GM13977 (cell line): ENCODE measurements at regions of chr17 and their contacts with region 1.

Region 1: GRCh38 chr17:61837175-61838051 is 25.9 kb downstream of the BRIP1 start:
- DNase-seq: peak; percentile 33
- CTCF ChIP-seq: peak; percentile 74

Region 2: DNA sequence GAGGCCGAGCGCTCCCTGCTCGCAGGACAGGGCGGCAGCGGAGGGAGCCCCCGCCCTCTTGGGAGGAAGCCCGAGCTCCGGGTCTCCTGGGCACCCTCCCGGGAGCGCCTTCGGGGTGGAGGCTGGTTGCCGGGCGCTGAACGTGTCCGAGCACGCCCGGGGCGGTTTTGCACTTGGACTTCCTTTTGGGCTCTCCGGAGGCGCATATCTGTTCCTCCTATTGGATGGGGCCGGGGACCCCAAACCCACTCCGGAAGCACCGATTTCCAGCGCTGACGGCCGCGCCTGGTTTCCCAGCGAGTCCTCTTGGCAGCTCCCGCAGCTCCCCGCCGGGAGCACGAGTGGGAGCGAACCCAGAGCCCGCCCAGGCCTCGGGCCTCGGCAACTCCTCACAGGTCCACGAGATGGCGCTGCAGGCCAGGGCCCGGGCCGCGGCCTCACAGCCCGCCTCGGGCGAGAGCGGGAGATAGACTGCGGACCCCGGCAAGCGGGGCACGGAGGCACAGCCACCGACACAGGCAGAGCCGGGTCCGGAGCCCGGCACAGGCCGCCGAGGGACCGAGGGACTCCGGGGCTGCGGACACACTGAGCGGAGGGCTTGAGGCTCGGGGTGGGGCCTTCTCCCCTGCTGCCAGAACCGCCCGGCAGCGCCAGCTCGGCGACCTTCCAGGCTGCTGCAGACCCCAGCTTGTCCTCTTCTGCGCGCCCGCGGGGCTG is 425.1 kb before region 1 on chr17:
- in situ Hi-C with region 1: loop called (anchors 25 kb)
- DNase-seq: peak; percentile 96
- CTCF ChIP-seq: peak; percentile 98

Region 3: GRCh38 chr17:61611673-61612022 is 225.8 kb before region 1 on chr17:
- in situ Hi-C with region 1: no loop called
- DNase-seq: no peak
- CTCF ChIP-seq: no peak

Region 4: DNA sequence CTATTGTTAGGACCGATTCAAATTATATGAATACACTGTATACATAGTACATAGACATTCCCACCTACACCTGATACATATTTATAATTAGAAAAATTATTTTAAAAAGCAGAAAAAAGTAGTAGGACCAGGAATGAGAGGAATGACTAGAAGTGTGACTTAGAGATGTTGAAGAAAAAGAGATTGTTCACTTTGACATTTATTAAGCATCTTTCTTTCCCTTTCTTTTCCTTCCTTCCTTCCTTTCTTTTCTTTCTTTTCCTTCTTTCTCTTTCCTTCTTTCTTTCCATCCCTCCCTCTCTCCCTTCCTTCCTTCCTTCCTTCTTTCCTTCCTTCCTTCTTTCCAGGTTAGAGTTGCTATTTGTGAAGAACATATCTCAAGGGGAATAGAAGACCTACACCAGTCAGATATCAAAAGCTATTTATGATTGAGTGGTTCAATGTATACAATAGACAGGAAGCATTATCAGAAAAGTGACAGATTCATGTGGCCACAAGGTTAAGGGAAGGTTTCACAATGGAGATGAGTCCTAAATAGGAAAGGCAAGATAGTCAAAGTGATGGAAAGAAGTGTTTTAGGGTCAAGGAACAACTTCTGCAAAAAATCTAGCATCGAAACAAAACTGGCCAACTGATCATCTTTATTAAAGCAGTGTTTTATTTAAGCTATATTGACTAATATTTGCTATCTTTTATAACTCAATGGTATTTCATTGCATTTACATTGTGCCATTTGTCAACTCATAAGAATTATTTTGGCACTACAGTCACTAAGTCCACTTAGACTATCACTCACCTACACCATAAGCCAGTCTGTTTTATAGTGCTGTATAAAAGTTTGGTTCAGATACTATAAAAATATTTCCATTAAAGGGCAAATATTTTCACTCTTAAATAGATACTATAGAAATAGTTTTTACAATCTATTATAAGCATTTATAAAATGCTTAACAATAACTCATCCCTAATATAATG is 192.3 kb before region 1 on chr17:
- in situ Hi-C with region 1: loop called (anchors 5 kb)
- DNase-seq: no peak
- CTCF ChIP-seq: no peak